Activated CD4-positive, alpha-beta T cell treated with anti-CD3 and anti-CD28 coated beads for 36 hours (primary cell): ENCODE measurements at regions of chr12 and their contacts with region 1.

Region 1: DNA sequence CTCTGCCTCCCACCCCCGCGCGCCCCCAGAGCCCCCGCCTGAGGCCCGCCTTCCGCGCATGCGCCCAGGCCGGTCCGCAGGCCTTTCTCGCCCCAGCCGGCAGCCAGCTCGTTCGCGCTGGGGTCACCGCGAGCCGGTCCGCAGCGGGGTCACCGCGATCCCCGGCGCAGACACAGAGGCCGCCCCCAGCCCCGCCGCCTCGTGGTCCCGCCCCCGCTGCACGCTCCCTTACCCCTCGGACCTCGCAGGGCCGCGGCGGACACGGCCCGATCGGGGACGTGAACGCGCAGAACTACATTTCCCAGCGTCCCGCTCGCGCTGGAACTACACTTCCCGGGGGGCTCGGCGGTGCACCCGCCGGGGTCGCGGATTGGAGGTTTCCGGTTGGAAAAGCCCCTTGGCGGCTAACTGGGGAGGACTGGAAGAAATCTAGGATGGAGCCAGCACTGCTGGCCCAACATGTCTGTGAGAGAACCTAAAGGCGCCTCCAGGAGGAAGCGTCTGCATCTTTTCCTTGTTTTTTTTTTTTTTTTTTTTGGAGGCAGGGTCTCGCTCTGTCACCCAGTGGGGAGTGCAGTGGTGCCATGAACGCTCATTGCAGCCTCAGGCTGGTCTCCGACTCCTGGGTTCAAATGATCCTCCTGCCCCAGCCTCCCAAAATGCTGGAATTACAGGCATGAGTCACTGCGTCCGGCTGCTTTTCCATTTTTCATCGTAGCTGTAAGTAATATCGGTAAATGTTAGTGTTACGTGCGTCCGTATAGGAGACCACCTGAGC is at the start of gene ZNF605:
- DNase-seq: peak; percentile 93
- ATAC-seq: peak; percentile 91
- H3K4me3 Mint-ChIP-seq: peak within 1 kb of the TSS; percentile 93
- H3K27ac Mint-ChIP-seq: peak within 1 kb of the TSS; percentile 88
- H3K4me1 Mint-ChIP-seq: peaks cover 22% of the 10 kb centered on the region
- H3K27me3 Mint-ChIP-seq: no peaks in the 10 kb centered on the region
- total RNA-seq, gene ZNF605: 8.0 to 8.3 TPM

Region 2: GRCh38 chr12:132986001-132986912 is 30.1 kb after region 1 on chr12 and contains the start of gene ZNF26:
- CTCF ChIA-PET with region 1: no interaction called
- POLR2A ChIA-PET with region 1: no interaction called
- intact Hi-C with region 1: loop called (anchors 1 kb)
- DNase-seq: peak; percentile 94
- ATAC-seq: peak; percentile 97
- H3K4me3 Mint-ChIP-seq: peak within 1 kb of the TSS; percentile 79
- H3K27ac Mint-ChIP-seq: peak within 1 kb of the TSS; percentile 96
- H3K4me1 Mint-ChIP-seq: peaks cover 26% of the 10 kb centered on the region
- H3K27me3 Mint-ChIP-seq: peaks cover 4% of the 10 kb centered on the region
- total RNA-seq, gene ZNF26: 12.3 to 17.0 TPM

Region 3: DNA sequence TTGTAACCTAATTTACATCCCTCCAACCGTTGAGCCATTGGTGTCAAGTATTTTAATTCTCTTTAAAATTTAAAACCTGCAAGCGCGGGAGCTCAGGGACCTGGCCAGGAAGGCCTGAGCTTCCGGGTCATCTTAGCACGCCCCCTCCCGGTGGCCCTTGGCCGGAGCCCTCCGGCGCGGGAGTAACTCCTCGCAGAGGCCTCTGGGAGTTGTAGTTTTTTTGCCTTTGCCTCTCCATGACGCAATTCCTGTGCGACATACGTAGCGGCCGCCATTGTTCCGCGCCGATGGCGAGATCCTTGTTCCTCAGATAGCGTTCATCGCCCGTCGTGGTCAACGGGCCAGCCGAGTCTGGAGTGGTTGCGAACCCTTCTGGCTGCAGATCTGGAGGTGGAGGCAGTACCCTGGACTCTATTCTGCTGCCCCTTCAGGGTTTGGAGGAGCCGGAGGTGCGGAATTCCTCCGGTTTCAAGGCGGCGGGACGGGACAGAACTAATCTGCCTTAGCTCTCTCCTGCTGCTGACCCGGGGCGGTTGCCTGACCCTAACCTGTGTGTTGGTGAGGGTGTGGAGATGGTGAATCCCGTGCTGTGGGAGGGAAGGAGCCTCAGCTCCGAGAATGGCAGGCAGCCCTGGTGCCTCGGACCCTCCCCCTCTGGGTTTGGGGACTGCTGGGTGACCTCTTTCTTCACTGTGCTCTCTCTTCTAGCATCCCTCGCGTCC is 225.2 kb after region 1 on chr12 and contains the start of gene ZNF268:
- CTCF ChIA-PET with region 1: interaction called, 3 read pairs
- POLR2A ChIA-PET with region 1: no interaction called
- intact Hi-C with region 1: loop called in 1 of 2 experiments (anchors 1 kb)
- DNase-seq: peak; percentile 95
- ATAC-seq: peak; percentile 96
- H3K4me3 Mint-ChIP-seq: peak within 1 kb of the TSS; percentile 90
- H3K27ac Mint-ChIP-seq: peak within 1 kb of the TSS; percentile 95
- H3K4me1 Mint-ChIP-seq: peaks cover 11% of the 10 kb centered on the region
- H3K27me3 Mint-ChIP-seq: no peaks in the 10 kb centered on the region
- total RNA-seq, gene ZNF268: 14.0 to 14.6 TPM